GM10248 (cell line): ENCODE measurements at regions of chr16 and their contacts with region 1.

Region 1: GRCh38 chr16:84617791-84618580 is at the start of gene COTL1:
- DNase-seq: peak; percentile 96
- CTCF ChIP-seq: no peak

Region 2: GRCh38 chr16:83835586-83836566 is 782.1 kb before region 1 on chr16:
- CTCF ChIA-PET with region 1: no interaction called
- POLR2A ChIA-PET with region 1: no interaction called
- DNase-seq: no peak
- CTCF ChIP-seq: no peak

Region 3: GRCh38 chr16:84414789-84415326 is 203.1 kb before region 1 on chr16:
- CTCF ChIA-PET with region 1: no interaction called
- POLR2A ChIA-PET with region 1: no interaction called
- DNase-seq: no peak
- CTCF ChIP-seq: no peak

Region 4: DNA sequence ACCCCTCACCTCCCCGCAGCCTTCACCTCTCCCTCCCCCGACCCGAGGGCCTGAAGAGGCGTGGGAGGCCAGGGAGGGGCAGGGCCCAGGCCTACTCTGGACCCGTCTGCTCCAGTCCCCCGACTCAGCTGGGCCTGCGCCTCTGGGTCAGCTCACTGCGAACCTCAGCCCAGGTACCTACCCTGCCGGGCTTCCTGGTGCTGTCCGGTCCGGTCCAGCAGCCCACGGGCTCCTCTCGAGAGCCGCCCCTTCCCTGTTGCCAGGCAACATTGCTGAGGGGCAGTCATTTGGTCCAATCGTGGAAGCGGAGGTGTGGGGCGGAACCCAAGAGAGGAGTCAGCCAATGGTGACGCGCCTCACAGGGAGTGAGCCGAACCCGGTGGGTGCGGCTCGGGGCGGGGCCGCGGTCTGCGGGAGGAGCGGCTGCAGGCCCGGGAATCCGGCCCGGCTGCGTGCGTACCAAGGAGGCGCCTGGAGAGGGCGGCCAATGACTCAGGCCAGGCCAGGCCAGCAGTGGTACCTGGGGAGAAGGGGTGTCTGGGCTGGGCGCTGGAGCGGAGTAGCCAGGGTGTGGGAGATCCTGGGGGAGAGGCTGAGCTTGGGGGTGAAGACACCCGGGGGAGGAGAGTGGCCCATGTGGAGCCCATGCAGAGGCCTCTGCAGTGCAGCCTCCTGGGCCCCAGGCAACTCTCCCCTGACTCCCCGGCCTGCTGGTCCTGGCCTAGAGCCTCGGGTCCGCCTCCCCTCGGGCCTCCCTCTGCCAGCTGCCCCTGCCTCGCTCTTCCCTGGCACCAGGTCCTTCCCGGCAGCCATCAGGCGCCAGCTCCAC is 113.4 kb before region 1 on chr16 and contains the start of gene MEAK7:
- CTCF ChIA-PET with region 1: interaction called, 172 read pairs
- POLR2A ChIA-PET with region 1: no interaction called
- DNase-seq: peak; percentile 99
- CTCF ChIP-seq: no peak

Region 5: GRCh38 chr16:84607694-84608093 is 10.3 kb before region 1 on chr16:
- CTCF ChIA-PET with region 1: interaction called, 43 read pairs
- POLR2A ChIA-PET with region 1: interaction called, 3 read pairs
- DNase-seq: peak; percentile 71
- CTCF ChIP-seq: no peak

Region 6: DNA sequence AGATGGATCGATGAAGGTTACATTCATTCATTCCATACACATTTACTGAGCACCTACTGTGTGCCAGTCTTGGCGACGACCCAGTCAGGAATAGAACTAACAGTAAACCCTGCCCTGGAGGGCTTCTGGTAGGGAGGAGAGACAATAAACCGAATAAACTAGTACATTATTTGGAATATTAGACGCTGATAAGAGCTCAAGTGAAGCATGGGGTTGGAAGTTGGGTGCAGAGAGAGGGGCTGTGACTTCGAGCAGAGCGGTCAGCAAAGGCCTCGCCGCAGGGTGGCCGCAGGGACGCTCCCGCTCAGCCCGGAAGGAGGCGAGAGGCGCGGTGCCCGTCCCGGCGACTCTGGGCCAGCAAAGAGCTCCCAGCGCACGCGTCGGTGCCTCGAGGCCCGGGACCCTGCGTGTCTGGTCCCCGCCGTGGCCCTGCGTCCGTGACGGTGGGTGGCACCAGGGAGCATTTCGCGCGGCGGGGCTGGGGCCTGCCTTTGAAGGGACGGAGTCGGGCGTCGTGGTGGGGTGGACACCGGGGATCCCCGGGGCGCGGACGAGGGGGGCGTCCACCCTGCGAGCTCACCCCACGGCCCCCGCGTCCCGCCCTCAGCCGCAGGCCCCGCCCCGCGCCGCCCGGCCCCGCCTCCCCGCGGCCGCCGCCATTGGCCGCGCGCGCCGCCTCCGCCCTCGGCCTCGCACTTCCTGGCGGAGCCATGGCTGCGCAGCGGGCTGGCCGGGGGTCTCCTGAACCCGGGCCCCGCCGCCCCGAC is 30.0 kb after region 1 on chr16 and contains the start of gene KLHL36:
- CTCF ChIA-PET with region 1: interaction called, 23 read pairs
- POLR2A ChIA-PET with region 1: no interaction called
- DNase-seq: peak; percentile 95
- CTCF ChIP-seq: no peak

Region 7: DNA sequence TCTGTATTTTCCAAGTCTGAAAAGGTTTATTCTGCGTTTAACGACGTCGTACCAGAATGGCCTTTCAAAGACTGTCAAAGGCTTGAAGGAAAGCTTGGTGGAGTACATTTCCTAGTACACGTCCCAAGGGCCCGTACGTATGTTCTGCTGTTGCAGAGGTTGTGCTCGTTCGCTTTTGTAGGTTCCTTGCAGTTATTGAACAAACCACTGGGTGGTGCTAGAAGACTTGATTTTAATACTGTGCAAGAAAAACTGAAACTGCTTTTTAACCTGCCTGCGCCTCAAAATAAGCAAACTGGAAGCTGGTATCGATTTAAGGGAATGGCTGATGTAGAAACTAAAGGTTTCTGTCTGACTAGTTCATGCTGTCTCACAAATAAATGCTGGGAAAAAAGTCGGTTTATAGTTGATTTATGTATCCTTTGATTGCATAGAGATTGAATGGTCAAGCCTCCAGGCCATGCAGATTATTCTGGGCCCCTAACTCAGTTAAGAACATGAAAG is 136.4 kb after region 1 on chr16:
- CTCF ChIA-PET with region 1: interaction called, 11 read pairs
- POLR2A ChIA-PET with region 1: no interaction called
- DNase-seq: peak; percentile 74
- CTCF ChIP-seq: peak; percentile 63